Heart right ventricle (tissue), 16 donors: ENCODE measurements at regions of chr16 and their contacts with region 1.

Region 1: GRCh38 chr16:30786936-30787612 is at the start of gene ZNF629:
- DNase-seq: peak; percentile 69 to 84
- ATAC-seq: peak; percentile 80 to 94 (median 89)
- H3K4me3 ChIP-seq: peak within 1 kb of the TSS; percentile 71 to 99 (median 88)
- H3K27ac ChIP-seq: peak within 1 kb of the TSS; percentile 74 to 99 (median 96)
- H3K4me1 ChIP-seq: peaks cover 10 to 26% (median 23%) of the 10 kb centered on the region in 9 donors
- H3K27me3 ChIP-seq: no peaks in the 10 kb centered on the region
- CTCF ChIP-seq: peak in 2 of 9 donors; percentile 9 to 10
- total RNA-seq, gene ZNF629: 20.3 to 35.5 (median 27.6) TPM

Region 2: GRCh38 chr16:30728899-30729672 is 58.0 kb before region 1 on chr16:
- intact Hi-C with region 1: no loop called
- DNase-seq: no peak
- ATAC-seq: peak in 4 of 8 donors; percentile 22 to 51 (median 50)
- H3K4me3 ChIP-seq: no peak overlapping the region
- H3K27ac ChIP-seq: peak overlapping the region in 2 of 10 donors; percentile 25
- H3K4me1 ChIP-seq: peaks cover 0 to 35% (median 6%) of the 10 kb centered on the region in 9 donors
- H3K27me3 ChIP-seq: no peaks in the 10 kb centered on the region
- CTCF ChIP-seq: no peak

Region 3: DNA sequence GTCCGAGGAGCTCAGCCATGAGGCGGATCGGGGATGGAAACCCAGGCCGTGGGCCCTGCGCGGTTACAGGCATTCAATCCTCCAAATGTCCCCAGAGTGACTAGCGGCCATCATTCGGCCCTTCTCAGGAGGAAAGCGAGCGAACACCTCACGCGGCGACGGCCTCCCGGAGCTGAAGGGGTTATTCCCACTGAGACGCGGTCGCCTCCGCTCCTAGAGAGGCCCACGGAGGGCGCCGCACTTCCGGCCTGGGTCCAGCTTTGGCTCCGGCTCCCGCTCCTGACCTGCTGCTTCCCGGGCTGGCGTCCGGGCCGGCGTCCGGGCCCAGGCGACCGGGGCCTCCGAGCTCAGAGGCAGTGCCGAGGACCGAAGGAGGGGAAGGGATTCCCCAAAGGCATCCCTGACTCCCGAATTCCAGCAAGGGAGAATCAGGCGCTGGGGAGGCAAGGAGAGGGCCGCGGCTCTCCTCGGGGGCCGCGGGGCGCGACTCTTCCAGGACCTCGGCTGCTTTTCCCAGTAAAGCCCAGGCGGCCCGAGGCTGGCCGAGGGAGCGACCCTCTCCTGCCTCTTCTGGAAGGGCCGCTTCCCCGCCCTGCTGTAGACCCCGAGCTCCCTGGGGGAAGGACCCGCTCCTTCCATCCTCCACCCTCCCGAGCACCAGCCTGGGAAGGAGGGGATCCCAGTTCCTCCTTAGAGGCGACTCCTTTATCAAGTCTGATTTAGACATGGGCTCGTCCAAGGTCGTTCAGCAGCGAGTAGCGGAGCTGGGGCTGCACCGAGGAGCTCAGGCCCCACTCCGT is 18.5 kb after region 1 on chr16:
- intact Hi-C with region 1: loop called in 4 of 10 experiments (anchors 1 kb)
- DNase-seq: peak; percentile 90 to 91
- ATAC-seq: peak; percentile 96 to 98 (median 98)
- H3K4me3 ChIP-seq: peak overlapping the region; percentile 44 to 89 (median 78)
- H3K27ac ChIP-seq: peak overlapping the region; percentile 87 to 99 (median 94)
- H3K4me1 ChIP-seq: peaks cover 0 to 27% (median 19%) of the 10 kb centered on the region in 9 donors
- H3K27me3 ChIP-seq: no peaks in the 10 kb centered on the region
- CTCF ChIP-seq: peak in 2 of 9 donors; percentile 18 to 27

Region 4: DNA sequence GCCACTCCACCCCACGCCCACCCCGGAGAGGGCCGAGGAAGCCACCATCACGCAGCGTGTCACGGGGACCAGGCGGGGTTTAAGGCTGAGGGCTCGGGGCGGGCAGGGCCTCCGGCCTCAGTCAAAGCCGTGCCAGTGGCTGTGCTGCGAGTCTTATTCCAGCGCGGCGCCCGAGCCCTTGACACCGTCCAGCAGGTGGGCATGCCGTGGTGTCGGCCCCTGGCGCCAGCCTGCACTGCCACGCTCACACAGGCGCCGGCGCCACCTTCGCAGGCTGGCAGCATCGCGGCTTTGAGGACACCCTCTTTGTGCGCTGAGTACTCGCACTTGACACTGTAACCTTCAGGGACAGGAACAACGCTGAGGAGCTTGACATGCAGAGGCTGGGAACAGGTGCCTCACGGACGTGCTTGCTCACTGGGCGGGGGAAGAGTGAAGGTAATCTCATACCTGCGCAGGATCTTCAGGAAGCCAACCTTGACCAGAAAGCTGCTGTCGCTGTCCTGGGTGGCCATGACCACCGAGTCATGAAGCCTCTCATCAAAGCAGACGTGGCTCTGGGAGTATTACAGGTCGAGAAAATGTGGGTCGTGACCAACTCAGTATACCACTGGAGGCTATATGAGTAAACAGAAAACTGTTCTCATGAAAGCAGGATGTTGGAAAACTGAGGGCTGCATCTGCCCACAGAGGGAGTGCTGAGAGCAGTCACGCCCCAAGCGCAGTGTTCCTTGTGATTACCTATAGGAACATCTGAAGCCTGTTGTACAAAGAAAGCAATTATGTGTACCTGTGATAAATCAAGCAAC is 34.1 kb after region 1 on chr16:
- intact Hi-C with region 1: no loop called
- DNase-seq: no peak
- ATAC-seq: peak in 1 of 8 donors; percentile 15
- H3K4me3 ChIP-seq: no peak overlapping the region
- H3K27ac ChIP-seq: no peak overlapping the region
- H3K4me1 ChIP-seq: no peaks in the 10 kb centered on the region
- H3K27me3 ChIP-seq: no peaks in the 10 kb centered on the region
- CTCF ChIP-seq: no peak

Region 5: DNA sequence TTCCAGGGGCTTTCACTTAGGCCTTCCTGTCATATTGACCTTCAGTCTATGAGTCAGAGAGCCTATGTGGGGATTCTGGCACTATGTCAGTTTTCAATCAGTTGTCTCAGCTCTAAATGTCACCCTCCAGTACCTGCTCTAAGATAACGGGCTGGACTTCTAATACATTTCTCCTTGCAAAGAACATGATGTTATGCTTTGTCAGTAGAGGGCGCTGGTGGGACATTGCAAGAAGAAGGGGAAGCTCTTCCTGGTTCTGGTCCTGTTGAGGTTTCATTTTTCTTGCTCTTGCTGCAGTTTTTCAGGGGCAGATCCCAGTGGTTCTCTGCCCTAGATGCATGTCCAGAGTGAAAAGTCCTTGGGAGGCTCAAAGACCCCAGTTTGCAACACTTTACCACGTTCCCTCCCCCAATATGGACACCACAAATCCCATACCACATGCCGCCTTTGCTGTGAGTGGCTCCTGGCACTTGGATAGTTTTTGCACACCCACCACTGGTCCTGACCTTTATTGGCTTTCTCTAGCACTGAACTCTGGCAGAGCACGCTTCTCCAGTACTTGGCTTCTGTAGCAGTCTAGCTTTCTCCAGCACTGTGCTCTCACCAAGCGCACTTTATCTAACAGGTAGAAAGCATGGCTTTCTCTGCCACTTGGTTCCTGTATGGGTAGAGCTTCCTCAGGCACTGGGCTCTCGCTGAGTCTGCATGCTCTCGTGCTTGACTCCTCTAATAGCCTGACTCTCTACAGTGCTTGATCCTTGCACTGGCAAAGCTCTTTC is 57.8 kb after region 1 on chr16:
- intact Hi-C with region 1: no loop called
- DNase-seq: peak; percentile 22 to 88
- ATAC-seq: peak; percentile 74 to 91 (median 86)
- H3K4me3 ChIP-seq: peak overlapping the region in 6 of 10 donors; percentile 28 to 39 (median 35)
- H3K27ac ChIP-seq: peak overlapping the region in 9 of 10 donors; percentile 27 to 71 (median 63)
- H3K4me1 ChIP-seq: peaks cover 4 to 29% (median 13%) of the 10 kb centered on the region in 9 donors
- H3K27me3 ChIP-seq: no peaks in the 10 kb centered on the region
- CTCF ChIP-seq: peak; percentile 83 to 92 (median 89)